Caco-2 (cell line): ENCODE measurements at regions of chr12 and their contacts with region 1.

Region 1: GRCh38 chr12:71472441-71472911 is 32.9 kb downstream of the LGR5 start:
- DNase-seq: peak in 1 of 2 experiments; percentile 18
- H3K4me3 ChIP-seq: no peak overlapping the region
- H3K4me3 Mint-ChIP-seq: no peak overlapping the region
- H3K27ac Mint-ChIP-seq: no peak overlapping the region
- H3K4me1 ChIP-seq: peaks cover 23% of the 10 kb centered on the region
- H3K4me1 Mint-ChIP-seq: peaks cover 19% of the 10 kb centered on the region
- H3K27me3 ChIP-seq: no peaks in the 10 kb centered on the region
- H3K27me3 Mint-ChIP-seq: no peaks in the 10 kb centered on the region
- CTCF ChIP-seq: no peak

Region 2: GRCh38 chr12:71220260-71220659 is 252.2 kb before region 1 on chr12:
- CTCF ChIA-PET with region 1: no interaction called
- POLR2A ChIA-PET with region 1: no interaction called
- intact Hi-C with region 1: no loop called
- DNase-seq: no peak
- H3K4me3 ChIP-seq: no peak overlapping the region
- H3K4me3 Mint-ChIP-seq: no peak overlapping the region
- H3K27ac Mint-ChIP-seq: no peak overlapping the region
- H3K4me1 ChIP-seq: peaks cover 12% of the 10 kb centered on the region
- H3K4me1 Mint-ChIP-seq: peaks cover 6% of the 10 kb centered on the region
- H3K27me3 ChIP-seq: no peaks in the 10 kb centered on the region
- H3K27me3 Mint-ChIP-seq: no peaks in the 10 kb centered on the region
- CTCF ChIP-seq: no peak

Region 3: DNA sequence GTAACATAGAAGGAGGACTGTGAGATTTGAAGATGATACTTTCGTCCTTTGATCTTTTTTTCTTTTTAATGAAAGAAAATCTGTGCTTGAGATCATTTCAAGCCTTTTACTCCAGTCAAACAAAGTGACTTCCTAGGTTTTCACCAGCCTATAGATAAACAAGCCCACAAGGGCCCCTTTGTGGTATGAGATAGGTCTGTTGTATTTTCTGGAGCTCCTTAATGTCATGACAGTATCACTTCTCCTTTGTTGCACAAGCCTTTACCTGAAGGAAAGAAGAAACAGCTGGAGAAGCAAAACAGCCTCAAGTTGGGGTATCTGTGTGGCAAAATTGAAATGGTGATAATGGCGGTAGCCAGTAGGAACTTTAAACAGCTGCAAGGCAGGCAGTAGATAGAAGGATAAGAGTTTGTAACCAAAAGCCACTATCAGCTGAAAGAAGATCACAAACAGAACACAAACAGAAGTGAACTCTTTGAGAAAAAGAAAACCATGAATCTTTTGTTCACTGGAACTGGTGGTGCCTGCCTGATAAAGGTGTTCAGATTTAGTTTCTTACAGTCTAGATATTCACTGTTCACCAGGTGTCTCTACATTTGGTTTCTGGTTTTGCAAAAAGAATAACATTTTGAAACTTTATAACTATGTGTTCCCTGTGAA is 63.9 kb after region 1 on chr12:
- CTCF ChIA-PET with region 1: no interaction called
- POLR2A ChIA-PET with region 1: no interaction called
- intact Hi-C with region 1: loop called (anchors 1 kb)
- DNase-seq: peak in 1 of 2 experiments; percentile 28
- H3K4me3 ChIP-seq: no peak overlapping the region
- H3K4me3 Mint-ChIP-seq: peak overlapping the region; percentile 59
- H3K27ac Mint-ChIP-seq: peak overlapping the region; percentile 88
- H3K4me1 ChIP-seq: peaks cover 39% of the 10 kb centered on the region
- H3K4me1 Mint-ChIP-seq: peaks cover 35% of the 10 kb centered on the region
- H3K27me3 ChIP-seq: no peaks in the 10 kb centered on the region
- H3K27me3 Mint-ChIP-seq: no peaks in the 10 kb centered on the region
- CTCF ChIP-seq: no peak